ENCODE measurements at regions of chr12 and their contacts with region 1.

Region 1: DNA sequence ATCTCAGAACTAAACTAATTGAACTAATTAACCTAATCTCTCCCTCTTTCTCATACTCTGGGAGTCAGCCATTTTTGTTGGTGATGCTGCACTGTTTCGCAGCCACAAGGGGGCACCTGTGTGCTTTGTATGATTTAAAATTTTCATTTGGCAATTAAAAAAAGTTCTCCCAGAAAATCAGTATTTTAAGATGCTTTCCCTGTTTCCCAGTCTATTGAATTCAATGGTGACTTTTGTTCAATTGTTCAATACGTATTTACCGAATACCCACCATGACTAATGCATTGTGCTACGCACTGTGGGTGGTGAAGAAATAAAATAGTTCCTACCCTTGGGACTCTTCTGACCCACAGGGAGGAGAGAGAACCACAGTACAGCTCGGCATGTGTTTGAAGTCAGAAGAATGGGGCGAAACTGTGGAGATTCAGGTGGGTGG is 63.7 kb downstream of the ZNF664 start:
- DNase-seq: peak; percentile 70
- ATAC-seq: peak; percentile 56
- H3K4me3 ChIP-seq: no peak overlapping the region
- H3K27ac ChIP-seq: no peak overlapping the region
- H3K4me1 ChIP-seq: no peaks in the 10 kb centered on the region
- H3K27me3 ChIP-seq: no peaks in the 10 kb centered on the region
- CTCF ChIP-seq: peak; percentile 98

Region 2: GRCh38 chr12:123801573-123802178 is 235.0 kb before region 1 on chr12:
- CTCF ChIA-PET with region 1: interaction called, 3 read pairs
- POLR2A ChIA-PET with region 1: no interaction called
- intact Hi-C with region 1: loop called (anchors 1 kb)
- DNase-seq: peak; percentile 72
- ATAC-seq: peak; percentile 62
- H3K4me3 ChIP-seq: no peak overlapping the region
- H3K27ac ChIP-seq: no peak overlapping the region
- H3K4me1 ChIP-seq: no peaks in the 10 kb centered on the region
- H3K27me3 ChIP-seq: no peaks in the 10 kb centered on the region
- CTCF ChIP-seq: peak; percentile 76

Region 3: GRCh38 chr12:123905319-123905925 is 131.3 kb before region 1 on chr12:
- CTCF ChIA-PET with region 1: interaction called, 4 read pairs
- POLR2A ChIA-PET with region 1: no interaction called
- intact Hi-C with region 1: loop called (anchors 5 kb)
- DNase-seq: peak; percentile 90
- ATAC-seq: peak; percentile 67
- H3K4me3 ChIP-seq: no peak overlapping the region
- H3K27ac ChIP-seq: no peak overlapping the region
- H3K4me1 ChIP-seq: peaks cover 4% of the 10 kb centered on the region
- H3K27me3 ChIP-seq: no peaks in the 10 kb centered on the region
- CTCF ChIP-seq: peak; percentile 96

Region 4: DNA sequence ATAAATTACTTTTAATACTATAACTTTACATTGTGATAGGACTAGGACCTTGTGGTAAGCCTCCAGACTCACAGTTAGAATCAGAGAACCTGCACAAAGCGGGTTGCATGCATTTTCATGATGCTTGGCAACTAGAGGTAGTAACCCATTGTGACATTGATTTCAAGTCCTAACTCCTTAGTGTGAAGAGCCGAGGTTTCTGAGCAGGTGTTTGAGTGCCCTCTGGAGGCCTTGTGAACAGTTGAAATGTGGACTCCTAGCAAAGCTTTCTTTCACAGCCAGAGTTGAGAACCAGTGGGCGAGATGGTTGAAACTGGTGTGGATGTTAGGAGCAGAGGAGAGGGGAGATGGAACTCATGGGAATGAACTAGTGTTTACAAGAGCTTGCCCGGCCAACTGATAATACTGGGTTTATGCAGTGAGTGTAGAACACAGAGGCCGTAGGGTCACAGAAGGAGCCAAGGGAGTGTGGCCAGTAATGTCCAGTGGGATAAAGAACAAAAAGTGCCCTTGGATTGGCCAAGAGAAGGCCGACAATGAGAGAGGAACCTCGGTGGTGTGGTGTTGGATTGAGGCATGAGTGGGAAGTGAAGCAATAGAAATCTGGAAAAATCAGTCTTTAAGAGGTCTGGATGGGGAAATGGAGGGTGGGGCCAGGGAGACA is 52.7 kb before region 1 on chr12:
- CTCF ChIA-PET with region 1: no interaction called
- POLR2A ChIA-PET with region 1: no interaction called
- intact Hi-C with region 1: loop called (anchors 2 kb)
- DNase-seq: peak; percentile 84
- ATAC-seq: peak; percentile 93
- H3K4me3 ChIP-seq: no peak overlapping the region
- H3K27ac ChIP-seq: no peak overlapping the region
- H3K4me1 ChIP-seq: no peaks in the 10 kb centered on the region
- H3K27me3 ChIP-seq: no peaks in the 10 kb centered on the region
- CTCF ChIP-seq: peak; percentile 96

Region 5: DNA sequence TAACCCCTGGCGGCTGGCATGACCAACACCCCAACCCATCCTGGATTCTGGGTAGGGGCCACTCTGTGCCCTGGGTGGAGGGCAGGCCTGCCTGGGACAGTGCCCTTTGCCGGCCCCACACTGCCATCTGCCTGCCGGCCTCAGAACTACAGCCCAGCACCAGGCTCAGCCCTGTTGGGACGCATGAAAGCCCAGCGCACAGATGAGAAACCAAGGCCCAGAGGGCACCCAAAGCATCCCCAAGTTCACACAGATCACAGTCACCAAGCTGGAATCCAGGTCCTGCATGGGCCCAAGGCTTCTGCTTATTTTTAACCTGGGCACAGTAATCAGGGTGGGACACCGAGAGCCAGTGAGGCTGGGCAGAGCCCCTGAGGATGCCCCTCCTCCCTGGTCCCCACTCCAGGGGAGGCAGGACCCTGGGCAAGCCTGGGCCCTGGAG is 284.4 kb after region 1 on chr12:
- CTCF ChIA-PET with region 1: interaction called, 4 read pairs
- POLR2A ChIA-PET with region 1: no interaction called
- intact Hi-C with region 1: loop called (anchors 1 kb)
- DNase-seq: peak; percentile 81
- ATAC-seq: peak; percentile 76
- H3K4me3 ChIP-seq: no peak overlapping the region
- H3K27ac ChIP-seq: no peak overlapping the region
- H3K4me1 ChIP-seq: no peaks in the 10 kb centered on the region
- H3K27me3 ChIP-seq: no peaks in the 10 kb centered on the region
- CTCF ChIP-seq: peak; percentile 96

Region 6: GRCh38 chr12:124767066-124767821 is 730.6 kb after region 1 on chr12:
- CTCF ChIA-PET with region 1: interaction called, 3 read pairs
- POLR2A ChIA-PET with region 1: no interaction called
- intact Hi-C with region 1: loop called (anchors 1 kb)
- DNase-seq: peak; percentile 78
- ATAC-seq: peak; percentile 78
- H3K4me3 ChIP-seq: no peak overlapping the region
- H3K27ac ChIP-seq: no peak overlapping the region
- H3K4me1 ChIP-seq: peaks cover 16% of the 10 kb centered on the region
- H3K27me3 ChIP-seq: no peaks in the 10 kb centered on the region
- CTCF ChIP-seq: peak; percentile 99

Region 7: DNA sequence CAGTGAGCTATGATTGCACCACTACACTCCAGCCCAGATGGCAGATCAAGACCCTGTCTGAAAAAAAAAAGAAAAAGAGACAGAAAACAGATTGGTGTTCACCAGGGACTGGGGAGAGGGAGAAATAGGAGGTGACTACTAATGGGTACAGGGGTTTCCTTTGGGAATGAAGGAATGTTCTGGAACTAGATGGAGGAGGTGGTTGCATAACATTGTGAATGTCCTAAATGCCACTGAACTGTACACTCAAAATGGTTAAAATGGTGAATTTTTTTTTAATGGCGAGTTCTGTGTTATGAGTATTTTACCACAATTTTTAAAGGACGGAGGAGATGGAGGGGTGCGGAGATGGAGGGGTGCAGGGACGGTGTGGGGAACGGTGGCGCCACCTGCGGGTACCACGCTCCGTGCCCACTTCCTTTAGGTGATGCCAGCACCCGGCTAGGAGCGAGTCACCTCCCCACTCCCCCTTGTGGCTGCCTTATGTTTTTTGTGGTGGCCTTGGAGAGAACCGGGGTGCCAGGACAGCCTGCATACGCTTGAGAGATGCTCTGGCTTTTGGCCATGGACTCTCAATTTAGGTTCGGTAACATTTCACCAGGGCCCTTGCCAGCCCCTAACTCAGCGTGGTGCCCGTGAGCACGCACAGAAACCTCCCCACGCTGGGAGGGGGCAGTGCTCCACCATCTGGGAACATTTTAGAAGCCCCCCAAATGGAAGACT is 861.7 kb after region 1 on chr12:
- CTCF ChIA-PET with region 1: no interaction called
- POLR2A ChIA-PET with region 1: no interaction called
- intact Hi-C with region 1: loop called (anchors 5 kb)
- DNase-seq: peak; percentile 69
- ATAC-seq: peak; percentile 90
- H3K4me3 ChIP-seq: no peak overlapping the region
- H3K27ac ChIP-seq: no peak overlapping the region
- H3K4me1 ChIP-seq: no peaks in the 10 kb centered on the region
- H3K27me3 ChIP-seq: no peaks in the 10 kb centered on the region
- CTCF ChIP-seq: peak; percentile 86